ENCODE measurements at regions of chr2 and their contacts with region 1.

Region 1: DNA sequence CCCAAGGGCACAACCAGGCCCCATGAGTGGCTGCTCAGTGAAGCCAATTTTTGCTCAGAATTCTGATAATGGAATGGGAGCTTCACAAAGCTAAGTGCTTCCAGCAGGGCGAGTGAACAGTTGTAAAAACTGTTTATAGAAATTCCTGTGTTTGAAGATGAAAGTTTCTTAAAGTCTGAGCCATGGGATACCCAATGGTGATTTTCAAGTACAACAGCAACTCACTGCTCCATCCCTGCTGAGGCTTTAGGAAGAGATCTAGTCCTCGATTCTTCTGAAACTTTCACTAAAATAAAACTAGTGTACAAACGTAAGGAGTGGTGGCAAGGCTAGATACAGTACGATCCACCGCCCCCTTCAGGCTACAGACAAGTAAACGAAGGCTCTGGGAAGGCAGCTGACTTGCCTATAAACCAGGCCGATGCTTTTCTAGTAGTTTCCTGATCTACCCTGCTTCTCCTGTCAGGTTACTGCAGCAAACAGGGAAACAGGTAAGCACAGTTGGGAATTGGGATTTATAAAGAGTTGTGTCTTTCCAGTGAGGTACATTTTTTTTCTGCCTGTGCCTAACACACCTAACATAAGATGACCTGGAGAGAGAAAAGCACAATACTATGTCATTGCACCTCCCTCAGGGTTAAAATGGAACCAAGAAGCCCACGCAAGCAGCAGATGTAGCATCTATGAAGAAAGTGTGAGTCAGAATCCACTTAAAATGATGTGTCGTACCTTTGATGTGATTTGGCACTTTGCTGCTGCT is 108.7 kb downstream of the UXS1 start:
- DNase-seq: peak; percentile 53
- H3K4me3 ChIP-seq: no peak overlapping the region
- H3K27ac ChIP-seq: no peak overlapping the region
- H3K4me1 ChIP-seq: peaks cover 0 to 6% (median 0%) of the 10 kb centered on the region in 4 donors
- H3K27me3 ChIP-seq: no peaks in the 10 kb centered on the region
- CTCF ChIP-seq: peak; percentile 20 to 46 (median 40)
- EP300 ChIP-seq: no peak
- POLR2A ChIP-seq: no peak

Region 2: DNA sequence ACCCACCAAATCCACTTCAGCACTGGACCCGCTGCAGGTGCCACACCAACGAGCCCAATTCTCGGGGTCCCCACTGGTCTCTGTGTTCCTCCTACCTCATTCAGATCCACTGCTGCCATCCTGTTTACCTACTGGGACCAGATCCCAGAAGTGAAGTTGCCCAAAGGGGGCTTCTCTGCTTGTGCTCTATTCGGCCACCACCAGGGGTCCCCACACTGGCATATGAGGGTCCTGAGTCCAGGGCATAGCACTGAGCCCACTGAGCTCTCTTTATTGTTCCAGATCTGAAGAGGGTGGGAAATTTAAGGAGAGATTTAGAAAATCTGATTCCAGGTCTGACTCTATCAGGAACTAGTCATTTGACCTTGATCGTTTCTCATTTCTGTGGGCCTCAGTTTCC is 841.4 kb before region 1 on chr2:
- in situ Hi-C with region 1: no loop called
- intact Hi-C with region 1: loop called (anchors 10 kb)
- DNase-seq: no peak
- H3K4me3 ChIP-seq: no peak overlapping the region
- H3K27ac ChIP-seq: no peak overlapping the region
- H3K4me1 ChIP-seq: no peaks in the 10 kb centered on the region
- H3K27me3 ChIP-seq: no peaks in the 10 kb centered on the region
- CTCF ChIP-seq: no peak
- EP300 ChIP-seq: no peak
- POLR2A ChIP-seq: no peak

Region 3: DNA sequence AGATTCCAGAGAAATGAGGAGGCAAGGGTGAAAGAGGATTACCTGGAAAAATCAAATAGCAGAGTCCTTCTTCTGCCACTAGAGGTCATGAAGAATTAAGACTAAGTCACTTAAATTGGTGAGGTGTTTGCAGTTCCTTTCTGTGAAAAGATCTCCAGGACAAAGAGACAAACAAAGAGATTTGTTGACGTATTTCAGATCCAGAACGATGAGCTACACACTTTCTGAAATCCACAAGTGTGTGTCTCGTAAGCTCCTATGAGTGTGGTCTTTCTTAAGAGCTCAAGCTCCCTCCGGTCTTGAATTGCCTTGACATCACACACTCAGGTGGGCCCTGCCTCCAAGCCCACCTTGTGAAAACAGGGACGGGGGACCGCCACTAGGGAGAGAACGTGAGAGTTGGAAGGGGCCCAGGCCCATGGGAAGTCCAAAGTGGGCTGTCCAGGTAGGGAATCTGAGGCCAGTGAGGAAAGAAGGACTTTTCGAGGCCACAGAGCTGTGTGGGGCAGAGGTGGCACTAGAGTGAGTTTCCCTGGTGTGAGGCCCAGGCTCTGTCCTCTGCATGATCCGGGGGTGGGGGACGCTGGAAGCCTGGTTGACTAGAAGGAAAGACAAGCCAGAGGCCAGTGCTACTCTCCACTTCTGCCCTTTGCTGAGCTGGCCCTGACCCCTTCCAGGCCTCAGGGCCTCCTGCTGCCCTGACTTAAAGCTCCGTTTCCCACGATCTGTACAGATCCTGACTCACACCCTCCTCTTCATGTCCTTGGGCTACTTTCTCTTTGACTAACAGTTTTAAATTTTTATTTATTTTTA is 508.7 kb before region 1 on chr2:
- in situ Hi-C with region 1: loop called in 1 of 4 experiments (anchors 25 kb)
- intact Hi-C with region 1: no loop called
- DNase-seq: no peak
- H3K4me3 ChIP-seq: no peak overlapping the region
- H3K27ac ChIP-seq: peak overlapping the region in 3 of 4 donors; percentile 48 to 58 (median 56)
- H3K4me1 ChIP-seq: peaks cover 0 to 53% (median 13%) of the 10 kb centered on the region in 4 donors
- H3K27me3 ChIP-seq: no peaks in the 10 kb centered on the region
- CTCF ChIP-seq: peak; percentile 60 to 79 (median 68)
- EP300 ChIP-seq: no peak
- POLR2A ChIP-seq: no peak